T-cell (primary cell): ENCODE measurements at regions of chr19 and their contacts with region 1.

Region 1: GRCh38 chr19:3398900-3399278 is 32.5 kb downstream of the NFIC start:
- DNase-seq: no peak
- ATAC-seq: no peak
- H3K4me3 ChIP-seq: no peak overlapping the region
- H3K4me3 Mint-ChIP-seq: no peak overlapping the region
- H3K27ac ChIP-seq: no peak overlapping the region
- H3K27ac Mint-ChIP-seq: no peak overlapping the region
- H3K4me1 ChIP-seq: no peaks in the 10 kb centered on the region
- H3K4me1 Mint-ChIP-seq: peaks cover 0 to 6% (median 3%) of the 10 kb centered on the region in 3 donors
- H3K27me3 ChIP-seq: no peaks in the 10 kb centered on the region
- H3K27me3 Mint-ChIP-seq: no peaks in the 10 kb centered on the region

Region 2: DNA sequence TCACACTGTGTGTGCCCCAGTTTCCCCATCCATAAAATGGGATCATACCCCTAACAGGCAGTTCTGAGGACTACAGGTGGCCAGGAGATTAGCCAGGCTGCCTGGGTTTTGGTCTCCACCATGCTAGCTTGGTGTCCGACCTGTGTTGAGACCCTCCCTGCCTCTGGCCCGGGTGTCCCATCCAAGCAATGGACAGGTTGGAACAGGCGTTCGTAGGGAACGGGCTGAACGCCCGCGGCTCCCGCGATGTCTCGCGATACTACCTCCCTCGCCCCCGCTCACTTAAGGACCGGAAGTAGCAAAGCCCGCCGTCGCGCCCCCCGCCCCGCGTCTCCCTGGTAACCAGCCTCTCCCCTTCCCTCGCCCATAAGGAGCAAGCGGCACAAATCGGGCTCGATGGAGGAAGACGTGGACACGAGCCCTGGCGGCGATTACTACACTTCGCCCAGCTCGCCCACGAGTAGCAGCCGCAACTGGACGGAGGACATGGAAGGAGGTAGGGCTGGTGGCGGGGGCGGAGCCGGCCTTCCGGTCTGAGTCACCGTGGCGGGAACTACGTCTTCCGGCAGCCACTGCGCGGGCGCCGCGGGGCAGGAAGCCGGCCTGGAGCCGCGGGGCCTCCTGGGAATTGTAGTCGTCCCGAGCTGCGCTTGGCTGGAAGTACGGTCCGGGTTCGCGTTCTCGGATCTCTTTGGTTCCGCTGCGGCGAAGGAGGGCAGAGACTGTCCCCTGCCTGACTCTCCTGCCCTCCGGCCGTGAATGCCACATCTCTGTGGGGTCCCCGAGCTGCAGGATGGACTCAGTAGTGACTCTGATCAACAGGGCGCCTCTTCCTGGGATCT is 36.0 kb after region 1 on chr19:
- CTCF ChIA-PET with region 1: interaction called in 1 of 2 experiments, 10 read pairs
- POLR2A ChIA-PET with region 1: no interaction called
- DNase-seq: peak; percentile 87 to 96 (median 92)
- ATAC-seq: peak; percentile 94 to 96 (median 96)
- H3K4me3 ChIP-seq: peak overlapping the region; percentile 65 to 96
- H3K4me3 Mint-ChIP-seq: peak overlapping the region; percentile 84 to 96 (median 96)
- H3K27ac ChIP-seq: peak overlapping the region; percentile 88
- H3K27ac Mint-ChIP-seq: peak overlapping the region; percentile 98 to 100
- H3K4me1 ChIP-seq: peaks cover 0 to 17% of the 10 kb centered on the region in 2 experiments
- H3K4me1 Mint-ChIP-seq: peaks cover 16 to 17% (median 16%) of the 10 kb centered on the region in 3 donors
- H3K27me3 ChIP-seq: no peaks in the 10 kb centered on the region
- H3K27me3 Mint-ChIP-seq: no peaks in the 10 kb centered on the region